B cell (primary cell): ENCODE measurements at regions of chr14 and their contacts with region 1.

Region 1: DNA sequence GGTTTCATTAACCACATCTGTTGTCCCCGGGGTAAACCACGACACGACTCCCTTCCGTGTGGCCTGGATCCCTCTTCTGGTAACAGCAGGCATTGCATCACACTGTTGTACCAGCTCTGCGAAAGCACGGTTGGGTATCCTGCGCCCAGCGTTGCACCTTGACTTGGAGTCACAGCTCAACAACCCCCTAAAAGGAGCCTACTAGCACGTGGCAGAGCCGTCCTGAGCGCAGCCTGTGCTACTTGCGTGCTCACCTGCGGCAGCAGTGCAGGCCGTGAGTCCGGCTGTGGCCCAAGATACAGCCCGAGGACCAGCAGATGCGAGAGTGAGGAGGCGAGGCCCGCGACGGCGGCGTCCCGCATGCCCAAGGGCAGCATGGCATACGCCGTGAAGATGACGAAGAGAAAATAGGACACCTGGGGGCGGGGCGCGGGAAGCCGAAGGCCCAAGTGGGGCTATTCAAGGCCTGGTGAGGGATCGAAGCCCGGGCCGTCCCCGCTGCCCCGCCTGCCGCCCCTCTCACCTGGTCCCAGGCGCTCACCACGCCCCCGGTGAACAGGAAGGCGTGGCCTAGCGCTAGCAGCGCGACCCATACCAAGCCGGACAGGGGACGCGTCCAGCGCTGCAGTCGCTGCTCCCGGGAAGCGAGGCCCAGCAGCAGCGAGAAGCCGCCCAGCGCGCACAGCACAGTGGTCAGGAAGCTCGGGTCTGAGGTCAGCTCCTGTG is 2.4 kb downstream of the ADCY4 start:
- DNase-seq: peak; percentile 91
- ATAC-seq: peak; percentile 95
- H3K4me3 ChIP-seq: peak overlapping the region in 4 of 5 experiments; percentile 37 to 67 (median 44)
- H3K4me3 Mint-ChIP-seq: peak overlapping the region; percentile 93
- H3K27ac ChIP-seq: no peak overlapping the region
- H3K27ac Mint-ChIP-seq: peak overlapping the region; percentile 76
- H3K4me1 ChIP-seq: peaks cover 39 to 43% of the 10 kb centered on the region in 2 donors
- H3K4me1 Mint-ChIP-seq: peaks cover 39% of the 10 kb centered on the region
- H3K27me3 ChIP-seq: peaks cover 0 to 33% (median 19%) of the 10 kb centered on the region in 4 experiments
- H3K27me3 Mint-ChIP-seq: peaks cover 17% of the 10 kb centered on the region
- CTCF ChIP-seq: peak; percentile 80

Region 2: GRCh38 chr14:24299255-24300195 is 32.9 kb before region 1 on chr14 and contains the starts of genes DHRS1 and NOP9:
- CTCF ChIA-PET with region 1: interaction called, 24 read pairs
- POLR2A ChIA-PET with region 1: interaction called, 3 read pairs
- intact Hi-C with region 1: no loop called
- DNase-seq: peak; percentile 95
- ATAC-seq: peak; percentile 86
- H3K4me3 ChIP-seq: peak within 1 kb of the TSS; percentile 58 to 93 (median 77)
- H3K4me3 Mint-ChIP-seq: peak within 1 kb of the TSS; percentile 96
- H3K27ac ChIP-seq: peak within 1 kb of the TSS; percentile 79 to 83
- H3K27ac Mint-ChIP-seq: peak within 1 kb of the TSS; percentile 98
- H3K4me1 ChIP-seq: peaks cover 30 to 41% of the 10 kb centered on the region in 2 donors
- H3K4me1 Mint-ChIP-seq: peaks cover 48% of the 10 kb centered on the region
- H3K27me3 ChIP-seq: no peaks in the 10 kb centered on the region
- H3K27me3 Mint-ChIP-seq: no peaks in the 10 kb centered on the region
- CTCF ChIP-seq: no peak
- total RNA-seq, gene DHRS1: 42.7 and 43.7 TPM in 2 replicates
- total RNA-seq, gene NOP9: 22.6 and 24.5 TPM in 2 replicates

Region 3: DNA sequence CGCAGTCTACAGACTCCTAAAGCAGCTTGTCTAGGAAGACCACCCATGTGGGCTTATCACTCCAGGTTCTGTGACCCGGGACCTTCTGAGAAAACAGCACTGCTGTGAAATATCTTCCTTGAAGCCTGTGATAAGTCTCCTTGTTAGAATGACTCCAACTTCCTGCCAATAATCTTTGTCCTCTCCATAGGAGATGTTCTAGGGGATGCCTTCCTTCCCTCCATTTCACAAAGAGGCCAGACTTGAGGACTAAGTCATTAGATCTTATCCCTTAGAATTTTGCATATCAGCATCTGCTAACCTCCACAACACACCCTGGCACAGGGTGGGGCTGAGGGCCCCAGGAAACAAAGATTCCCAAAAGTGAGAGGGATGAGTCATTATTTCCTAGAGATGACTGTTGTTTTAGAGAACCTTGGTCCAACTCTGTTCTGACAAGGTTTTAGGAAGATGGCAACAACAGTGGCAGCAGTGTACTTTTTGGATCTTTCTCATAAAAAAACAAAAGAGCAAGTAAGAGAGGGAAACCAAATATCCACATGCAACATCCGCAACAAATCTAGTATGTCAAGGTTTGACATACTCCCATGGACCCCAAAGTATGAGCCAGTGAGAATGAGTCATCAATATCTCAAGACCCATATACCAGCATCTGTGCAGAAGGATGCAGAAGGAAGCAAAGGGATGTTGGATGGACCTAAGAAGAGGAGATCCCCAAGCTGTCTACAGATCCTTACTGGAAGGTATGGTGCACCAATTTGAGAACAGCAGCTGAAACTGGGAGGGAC is 15.1 kb before region 1 on chr14:
- CTCF ChIA-PET with region 1: interaction called, 80 read pairs
- POLR2A ChIA-PET with region 1: no interaction called
- intact Hi-C with region 1: no loop called
- DNase-seq: no peak
- ATAC-seq: no peak
- H3K4me3 ChIP-seq: no peak overlapping the region
- H3K4me3 Mint-ChIP-seq: no peak overlapping the region
- H3K27ac ChIP-seq: no peak overlapping the region
- H3K27ac Mint-ChIP-seq: no peak overlapping the region
- H3K4me1 ChIP-seq: peaks cover 20 to 26% of the 10 kb centered on the region in 2 donors
- H3K4me1 Mint-ChIP-seq: peaks cover 27% of the 10 kb centered on the region
- H3K27me3 ChIP-seq: peaks cover 0 to 6% (median 0%) of the 10 kb centered on the region in 4 experiments
- H3K27me3 Mint-ChIP-seq: peaks cover 11% of the 10 kb centered on the region
- CTCF ChIP-seq: no peak

Region 4: DNA sequence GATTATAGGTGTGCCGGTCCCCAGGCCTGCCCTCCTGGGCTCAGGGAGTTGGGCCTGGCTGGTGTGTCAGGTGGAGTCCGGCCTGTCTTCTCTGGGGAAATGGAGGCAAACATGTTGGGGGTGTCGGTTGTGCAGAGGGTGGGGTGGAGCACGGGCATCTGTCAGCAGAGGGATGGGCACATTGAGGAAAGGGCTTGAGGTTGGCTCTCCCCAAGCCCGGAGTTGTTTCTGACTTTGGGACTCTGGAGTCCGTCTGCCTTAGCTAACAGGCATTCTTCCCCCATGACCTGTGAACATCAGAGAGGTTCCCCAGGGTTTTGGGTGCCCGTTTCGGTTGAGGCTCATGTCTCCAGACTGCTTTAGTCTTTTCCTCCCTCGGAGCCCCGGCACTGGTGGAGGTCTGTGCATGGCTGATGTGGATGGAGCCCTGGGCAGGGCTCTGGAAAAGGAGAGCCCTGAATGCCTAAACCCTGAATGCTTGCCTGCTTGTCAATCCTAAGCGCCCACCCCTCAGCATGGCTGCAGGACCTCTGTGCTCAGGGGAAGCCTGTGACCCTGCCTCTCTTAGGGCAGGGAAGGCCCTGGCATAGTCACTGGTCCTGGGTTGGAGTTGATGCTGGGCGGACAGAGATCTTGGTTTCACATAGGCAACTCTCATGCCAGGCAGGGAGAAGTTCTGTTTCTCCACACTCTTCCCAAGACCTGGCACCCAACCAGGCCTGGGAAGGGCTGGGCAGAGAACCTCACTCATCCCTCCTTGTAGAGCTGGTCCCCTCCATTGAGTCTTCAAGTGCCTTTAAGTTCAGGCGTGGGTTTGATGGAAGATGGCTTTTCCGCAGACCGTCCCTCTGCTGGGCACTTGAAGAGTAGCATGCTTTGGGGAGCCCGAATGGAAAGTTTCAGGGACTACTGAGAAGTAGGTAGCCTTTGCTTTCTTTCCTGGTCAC is 79.3 kb after region 1 on chr14:
- CTCF ChIA-PET with region 1: interaction called, 29 read pairs
- POLR2A ChIA-PET with region 1: no interaction called
- intact Hi-C with region 1: loop called (anchors 1 kb)
- DNase-seq: peak; percentile 67
- ATAC-seq: peak; percentile 87
- H3K4me3 ChIP-seq: no peak overlapping the region
- H3K4me3 Mint-ChIP-seq: no peak overlapping the region
- H3K27ac ChIP-seq: no peak overlapping the region
- H3K27ac Mint-ChIP-seq: no peak overlapping the region
- H3K4me1 ChIP-seq: no peaks in the 10 kb centered on the region
- H3K4me1 Mint-ChIP-seq: no peaks in the 10 kb centered on the region
- H3K27me3 ChIP-seq: peaks cover 0 to 18% (median 4%) of the 10 kb centered on the region in 4 experiments
- H3K27me3 Mint-ChIP-seq: peaks cover 14% of the 10 kb centered on the region
- CTCF ChIP-seq: peak; percentile 72

Region 5: DNA sequence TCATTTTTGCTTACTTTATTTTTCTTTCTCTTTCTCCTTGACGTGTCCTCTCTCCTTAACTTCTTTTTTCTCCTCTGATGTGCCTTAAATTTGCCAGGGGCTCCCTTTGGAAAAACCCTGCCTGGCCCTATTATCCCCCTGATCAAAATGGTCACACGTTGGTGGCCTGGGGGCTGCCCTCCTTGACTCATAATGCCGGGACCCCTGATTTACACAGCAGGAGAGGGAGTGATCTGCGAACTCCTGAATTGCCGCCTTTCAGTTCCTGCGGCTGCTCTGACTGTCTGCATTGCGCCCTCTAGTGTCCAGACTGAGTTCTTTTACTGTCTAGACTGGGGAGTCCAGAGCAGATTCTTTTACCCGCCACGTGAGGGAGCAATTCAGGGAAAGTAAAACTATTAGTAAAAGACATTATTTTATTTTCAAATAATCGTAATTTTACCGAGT is 346.4 kb after region 1 on chr14:
- CTCF ChIA-PET with region 1: interaction called, 3 read pairs
- POLR2A ChIA-PET with region 1: no interaction called
- intact Hi-C with region 1: loop called (anchors 10 kb)
- DNase-seq: peak; percentile 91
- ATAC-seq: peak; percentile 96
- H3K4me3 ChIP-seq: peak overlapping the region; percentile 3 to 58 (median 31)
- H3K4me3 Mint-ChIP-seq: peak overlapping the region; percentile 84
- H3K27ac ChIP-seq: peak overlapping the region in 1 of 2 donors; percentile 7
- H3K27ac Mint-ChIP-seq: peak overlapping the region; percentile 76
- H3K4me1 ChIP-seq: peaks cover 32% of the 10 kb centered on the region in 2 donors
- H3K4me1 Mint-ChIP-seq: peaks cover 49% of the 10 kb centered on the region
- H3K27me3 ChIP-seq: no peaks in the 10 kb centered on the region
- H3K27me3 Mint-ChIP-seq: no peaks in the 10 kb centered on the region
- CTCF ChIP-seq: peak; percentile 100